B cell (primary cell): ENCODE measurements at regions of chr1 and their contacts with region 1.

Region 1: GRCh38 chr1:182129398-182129797 is 67.9 kb upstream of the ZNF648 start:
- DNase-seq: no peak
- ATAC-seq: no peak
- H3K4me3 ChIP-seq: no peak overlapping the region
- H3K4me3 Mint-ChIP-seq: no peak overlapping the region
- H3K27ac ChIP-seq: no peak overlapping the region
- H3K27ac Mint-ChIP-seq: no peak overlapping the region
- H3K4me1 ChIP-seq: no peaks in the 10 kb centered on the region
- H3K4me1 Mint-ChIP-seq: no peaks in the 10 kb centered on the region
- H3K27me3 ChIP-seq: no peaks in the 10 kb centered on the region
- H3K27me3 Mint-ChIP-seq: peaks cover 12% of the 10 kb centered on the region
- CTCF ChIP-seq: no peak

Region 2: DNA sequence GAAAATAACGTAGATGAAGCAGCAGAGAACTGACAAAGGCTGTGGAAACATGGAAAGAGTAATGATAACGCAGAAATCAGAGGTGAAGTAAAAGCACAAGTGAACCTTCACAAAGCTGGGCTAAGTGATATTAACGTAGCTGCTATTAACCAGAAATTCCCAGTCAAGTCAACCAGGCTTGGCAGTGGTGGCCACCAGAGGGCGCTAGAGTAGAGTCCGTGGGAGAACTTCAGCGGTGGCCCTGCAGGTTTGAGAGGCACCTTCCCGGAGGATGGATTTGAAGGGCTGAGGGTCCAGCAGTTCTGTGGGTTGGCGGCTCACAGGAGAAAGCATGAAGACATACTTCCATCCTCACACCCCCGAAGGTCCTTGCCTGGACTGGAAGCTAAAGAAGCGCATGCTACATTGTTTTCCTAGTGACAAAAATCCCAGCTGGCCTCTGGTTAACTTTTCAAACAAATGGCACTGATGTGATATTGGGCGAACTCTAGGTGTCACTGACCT is 13.8 kb after region 1 on chr1:
- CTCF ChIA-PET with region 1: interaction called, 13 read pairs
- POLR2A ChIA-PET with region 1: no interaction called
- intact Hi-C with region 1: no loop called
- DNase-seq: peak; percentile 79
- ATAC-seq: peak; percentile 61
- H3K4me3 ChIP-seq: no peak overlapping the region
- H3K4me3 Mint-ChIP-seq: no peak overlapping the region
- H3K27ac ChIP-seq: no peak overlapping the region
- H3K27ac Mint-ChIP-seq: no peak overlapping the region
- H3K4me1 ChIP-seq: peaks cover 0 to 9% of the 10 kb centered on the region in 2 donors
- H3K4me1 Mint-ChIP-seq: peaks cover 8% of the 10 kb centered on the region
- H3K27me3 ChIP-seq: peaks cover 0 to 4% (median 0%) of the 10 kb centered on the region in 4 experiments
- H3K27me3 Mint-ChIP-seq: peaks cover 20% of the 10 kb centered on the region
- CTCF ChIP-seq: peak; percentile 90

Region 3: DNA sequence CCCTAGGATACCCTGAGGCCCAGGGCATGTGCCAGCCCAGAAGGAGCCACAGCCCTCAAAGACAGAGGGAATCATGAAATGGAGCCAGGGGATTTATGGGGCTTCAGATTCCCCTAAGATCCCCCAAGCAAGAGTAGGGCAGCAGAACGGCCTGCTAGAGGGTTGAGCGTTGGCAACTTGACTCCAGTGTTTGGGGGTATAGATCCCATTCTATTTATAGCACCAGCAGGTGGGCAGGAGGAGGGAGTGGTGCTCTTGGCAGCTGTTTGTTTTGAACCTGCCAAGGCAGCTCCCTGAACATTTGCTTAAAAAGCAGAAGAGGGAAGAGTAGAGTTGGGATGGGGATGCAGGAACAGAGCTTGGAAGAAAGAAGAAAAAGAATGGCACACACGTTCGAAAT is 228.5 kb after region 1 on chr1:
- CTCF ChIA-PET with region 1: no interaction called
- POLR2A ChIA-PET with region 1: no interaction called
- intact Hi-C with region 1: no loop called
- DNase-seq: no peak
- ATAC-seq: no peak
- H3K4me3 ChIP-seq: no peak overlapping the region
- H3K4me3 Mint-ChIP-seq: no peak overlapping the region
- H3K27ac ChIP-seq: no peak overlapping the region
- H3K27ac Mint-ChIP-seq: no peak overlapping the region
- H3K4me1 ChIP-seq: no peaks in the 10 kb centered on the region
- H3K4me1 Mint-ChIP-seq: no peaks in the 10 kb centered on the region
- H3K27me3 ChIP-seq: peaks cover 0 to 3% (median 0%) of the 10 kb centered on the region in 4 experiments
- H3K27me3 Mint-ChIP-seq: peaks cover 4% of the 10 kb centered on the region
- CTCF ChIP-seq: no peak